GM12878 (cell line): ENCODE measurements at regions of chr2 and their contacts with region 1.

Region 1: GRCh38 chr2:47751875-47752357 is 31.0 kb upstream of the MSH6 start:
- DNase-seq: no peak
- ATAC-seq: peak; percentile 6
- H3K4me3 ChIP-seq: no peak overlapping the region
- H3K27ac ChIP-seq: peak overlapping the region; percentile 87
- H3K4me1 ChIP-seq: peaks cover 33% of the 10 kb centered on the region
- H3K27me3 ChIP-seq: no peaks in the 10 kb centered on the region
- CTCF ChIP-seq: no peak
- EP300 ChIP-seq: no peak
- POLR2A ChIP-seq: no peak
- RAD21 ChIP-seq: no peak

Region 2: DNA sequence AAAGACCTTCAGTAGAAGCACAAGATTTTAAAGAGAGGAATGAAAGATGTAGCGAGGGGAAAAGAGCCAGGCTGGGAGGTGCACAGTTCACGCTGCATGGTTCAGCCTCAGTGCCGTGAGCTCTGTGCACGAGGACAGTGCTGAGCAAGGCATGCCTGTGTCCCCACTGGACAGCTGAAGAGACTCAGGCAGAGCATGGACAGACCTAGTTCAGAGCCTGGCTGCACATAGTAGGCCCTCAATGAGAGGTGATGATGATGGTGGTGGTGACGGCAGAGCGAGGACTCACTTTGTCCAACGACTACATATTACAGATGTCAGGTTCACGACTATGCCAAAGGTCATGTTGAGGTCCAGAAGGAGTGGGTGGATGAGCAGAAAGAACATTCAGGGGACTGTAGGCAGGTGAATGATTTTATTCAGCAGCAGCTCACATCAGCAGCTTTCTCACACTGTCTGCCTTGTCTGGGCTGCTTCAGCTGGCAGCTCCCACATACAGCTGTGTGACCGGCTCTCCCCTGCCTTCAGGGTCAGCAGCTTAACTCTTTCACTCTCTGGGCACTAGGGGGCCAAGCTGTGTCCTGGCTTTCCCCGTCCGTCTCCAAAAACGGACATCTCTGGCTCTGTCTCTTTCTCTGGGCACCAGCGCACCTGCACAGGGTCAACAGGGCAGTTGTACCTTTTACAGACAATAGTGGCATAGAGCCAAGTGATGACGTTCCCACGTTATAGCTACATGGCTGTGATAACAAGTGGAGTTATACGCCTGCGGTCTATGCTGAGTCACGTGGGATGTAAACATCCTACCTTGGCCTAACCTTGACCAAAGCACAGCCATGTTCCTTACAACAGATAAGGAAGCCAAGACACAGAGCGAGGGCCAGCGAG is 97.8 kb before region 1 on chr2:
- CTCF ChIA-PET with region 1: interaction called, 3 read pairs
- POLR2A ChIA-PET with region 1: interaction called, 10 read pairs
- RAD21 ChIA-PET with region 1: interaction called, 3 read pairs
- SMC1A ChIA-PET with region 1: interaction called, 3 read pairs
- in situ Hi-C with region 1: no loop called
- intact Hi-C with region 1: no loop called
- DNase-seq: no peak
- ATAC-seq: peak; percentile 50
- H3K4me3 ChIP-seq: no peak overlapping the region
- H3K27ac ChIP-seq: no peak overlapping the region
- H3K4me1 ChIP-seq: peaks cover 39% of the 10 kb centered on the region
- H3K27me3 ChIP-seq: no peaks in the 10 kb centered on the region; a peak in 1 of 4 replicates
- CTCF ChIP-seq: peak in 2 of 3 experiments; percentile 31 to 35; a peak in 3 of 6 replicates
- EP300 ChIP-seq: no peak
- POLR2A ChIP-seq: no peak
- RAD21 ChIP-seq: peak; percentile 47; the same call in 1 of the 2 replicates

Region 3: GRCh38 chr2:47719099-47719498 is 32.8 kb before region 1 on chr2:
- CTCF ChIA-PET with region 1: interaction called, 6 read pairs
- POLR2A ChIA-PET with region 1: interaction called, 43 read pairs
- RAD21 ChIA-PET with region 1: interaction called, 52 read pairs
- SMC1A ChIA-PET with region 1: interaction called, 36 read pairs
- in situ Hi-C with region 1: no loop called
- intact Hi-C with region 1: loop called (anchors 1 kb)
- DNase-seq: peak; percentile 44
- ATAC-seq: peak; percentile 73
- H3K4me3 ChIP-seq: no peak overlapping the region
- H3K27ac ChIP-seq: peak overlapping the region; percentile 7; the same call in 1 of the 2 replicates
- H3K4me1 ChIP-seq: peaks cover 45% of the 10 kb centered on the region
- H3K27me3 ChIP-seq: no peaks in the 10 kb centered on the region
- CTCF ChIP-seq: no peak
- EP300 ChIP-seq: peak; percentile 66 to 70; a peak in 2 of 4 replicates
- POLR2A ChIP-seq: no peak
- RAD21 ChIP-seq: no peak